IMR-90 (cell line): ENCODE measurements at regions of chr11 and their contacts with region 1.

Region 1: DNA sequence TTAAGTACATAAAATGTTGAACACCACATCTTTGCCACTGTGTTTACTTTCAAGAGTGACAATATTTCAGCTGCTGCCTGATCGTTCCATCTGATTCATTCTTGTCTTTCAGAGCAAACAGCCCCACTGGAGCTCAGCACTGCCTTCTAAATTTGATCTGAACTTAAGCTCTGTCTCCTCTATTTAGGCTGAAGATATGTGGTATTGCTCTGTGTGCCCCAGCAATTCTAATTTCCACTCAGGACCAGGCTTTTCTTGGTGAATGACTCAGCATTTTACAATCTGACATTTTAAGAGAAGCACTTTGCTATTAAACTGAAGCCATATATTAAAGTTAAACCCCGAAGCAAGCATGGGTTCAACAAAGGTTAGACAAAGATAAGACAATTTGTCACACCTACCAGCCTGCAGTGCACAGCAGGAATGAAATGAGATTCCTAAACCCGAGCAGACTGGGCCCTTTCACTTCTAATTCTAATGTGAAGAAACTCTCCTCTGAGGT is 41.6 kb upstream of the PLET1 start:
- DNase-seq: peak; percentile 30
- ATAC-seq: peak; percentile 64
- H3K4me3 ChIP-seq: no peak overlapping the region
- H3K27ac ChIP-seq: peak overlapping the region; percentile 79; the same call in 1 of the 2 replicates
- H3K4me1 ChIP-seq: peaks cover 9% of the 10 kb centered on the region
- H3K27me3 ChIP-seq: no peaks in the 10 kb centered on the region
- CTCF ChIP-seq: no peak
- POLR2A ChIP-seq: no peak
- RAD21 ChIP-seq: no peak

Region 2: DNA sequence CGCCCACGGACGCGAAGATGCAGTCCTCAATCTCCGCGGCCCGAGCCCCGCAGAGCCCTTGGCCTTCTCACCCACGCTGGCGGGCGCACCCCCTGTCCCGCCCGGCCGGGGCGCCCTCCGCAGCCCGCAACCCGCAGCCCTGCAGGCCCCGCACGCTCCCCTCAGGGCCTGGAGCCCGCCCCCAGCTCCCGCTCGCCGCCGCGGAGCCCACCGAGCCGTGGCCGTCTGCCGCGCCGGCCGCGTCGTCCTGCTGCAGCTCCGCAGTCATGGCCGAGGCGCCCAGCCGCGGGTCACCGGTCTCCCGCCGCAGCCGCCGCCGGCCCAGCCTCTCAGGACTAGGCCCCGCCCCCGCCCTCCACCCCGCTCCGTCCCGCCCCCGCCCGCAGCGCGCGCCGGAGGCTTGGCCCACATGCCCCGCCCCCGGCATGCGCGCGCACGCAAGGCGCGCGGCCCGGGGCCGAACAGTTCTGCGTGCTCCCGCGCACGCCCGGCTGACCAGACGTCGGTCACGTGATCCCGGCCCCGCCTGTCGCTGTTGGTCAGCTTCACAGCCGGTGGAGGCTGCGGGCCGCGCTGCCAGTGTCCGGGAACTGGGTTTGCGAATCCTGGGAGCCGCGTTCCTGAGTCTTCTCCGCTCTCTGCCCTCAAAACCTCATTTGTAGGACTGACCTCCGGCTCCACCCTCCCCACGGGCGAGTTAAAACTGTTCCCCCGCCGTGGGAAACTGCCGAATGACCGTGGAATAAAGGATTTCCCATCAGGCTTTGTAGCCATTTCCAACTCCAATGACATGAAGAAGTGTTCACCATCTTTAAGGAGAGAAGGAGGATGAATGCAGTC is 1573.2 kb after region 1 on chr11 and contains the start of gene USP28:
- CTCF ChIA-PET with region 1: no interaction called
- POLR2A ChIA-PET with region 1: no interaction called
- dilution Hi-C with region 1: no loop called
- in situ Hi-C with region 1: no loop called
- intact Hi-C with region 1: loop called (anchors 10 kb)
- DNase-seq: peak; percentile 95
- ATAC-seq: peak; percentile 97
- H3K4me3 ChIP-seq: peak within 1 kb of the TSS; percentile 69
- H3K27ac ChIP-seq: peak within 1 kb of the TSS; percentile 93
- H3K4me1 ChIP-seq: peaks cover 4% of the 10 kb centered on the region; the same call in 1 of the 2 replicates
- H3K27me3 ChIP-seq: no peaks in the 10 kb centered on the region
- CTCF ChIP-seq: no peak
- POLR2A ChIP-seq: peak; percentile 93
- RAD21 ChIP-seq: no peak
- total RNA-seq, gene USP28: 24.7 and 36.0 TPM in 2 replicates